ENCODE measurements at regions of chr17 and their contacts with region 1.

Region 1: GRCh38 chr17:49556223-49556971 is 19.3 kb upstream of the NXPH3 start:
- DNase-seq: peak; percentile 64 to 87 (median 73)
- H3K4me3 ChIP-seq: no peak overlapping the region
- H3K27ac ChIP-seq: peak overlapping the region in 1 of 5 donors; percentile 53
- H3K4me1 ChIP-seq: peaks cover 0 to 7% of the 10 kb centered on the region in 2 donors
- H3K27me3 ChIP-seq: no peaks in the 10 kb centered on the region
- CTCF ChIP-seq: peak; percentile 80 to 98 (median 94)
- POLR2A ChIP-seq: no peak

Region 2: GRCh38 chr17:49407981-49408501 is 148.4 kb before region 1 on chr17:
- intact Hi-C with region 1: loop called in 1 of 2 experiments (anchors 10 kb)
- DNase-seq: peak; percentile 44 to 84 (median 57)
- H3K4me3 ChIP-seq: no peak overlapping the region
- H3K27ac ChIP-seq: no peak overlapping the region
- H3K4me1 ChIP-seq: peaks cover 0 to 3% of the 10 kb centered on the region in 2 donors
- H3K27me3 ChIP-seq: no peaks in the 10 kb centered on the region
- CTCF ChIP-seq: peak in 5 of 6 experiments; percentile 49 to 65 (median 54)
- POLR2A ChIP-seq: no peak

Region 3: GRCh38 chr17:49434821-49435670 is 121.4 kb before region 1 on chr17:
- intact Hi-C with region 1: loop called (anchors 2 to 10 kb)
- DNase-seq: peak; percentile 38 to 74 (median 44)
- H3K4me3 ChIP-seq: no peak overlapping the region
- H3K27ac ChIP-seq: no peak overlapping the region
- H3K4me1 ChIP-seq: no peaks in the 10 kb centered on the region
- H3K27me3 ChIP-seq: peaks cover 7% of the 10 kb centered on the region
- CTCF ChIP-seq: peak; percentile 33 to 65 (median 56)
- POLR2A ChIP-seq: no peak

Region 4: GRCh38 chr17:49496183-49496866 is 60.1 kb before region 1 on chr17:
- intact Hi-C with region 1: loop called (anchors 2 to 10 kb)
- DNase-seq: peak; percentile 35 to 84 (median 76)
- H3K4me3 ChIP-seq: peak overlapping the region in 2 of 4 donors; percentile 26 to 50
- H3K27ac ChIP-seq: peak overlapping the region in 1 of 5 donors; percentile 15
- H3K4me1 ChIP-seq: peaks cover 13 to 25% of the 10 kb centered on the region in 2 donors
- H3K27me3 ChIP-seq: peaks cover 60% of the 10 kb centered on the region
- CTCF ChIP-seq: peak; percentile 44 to 90 (median 72)
- POLR2A ChIP-seq: no peak

Region 5: DNA sequence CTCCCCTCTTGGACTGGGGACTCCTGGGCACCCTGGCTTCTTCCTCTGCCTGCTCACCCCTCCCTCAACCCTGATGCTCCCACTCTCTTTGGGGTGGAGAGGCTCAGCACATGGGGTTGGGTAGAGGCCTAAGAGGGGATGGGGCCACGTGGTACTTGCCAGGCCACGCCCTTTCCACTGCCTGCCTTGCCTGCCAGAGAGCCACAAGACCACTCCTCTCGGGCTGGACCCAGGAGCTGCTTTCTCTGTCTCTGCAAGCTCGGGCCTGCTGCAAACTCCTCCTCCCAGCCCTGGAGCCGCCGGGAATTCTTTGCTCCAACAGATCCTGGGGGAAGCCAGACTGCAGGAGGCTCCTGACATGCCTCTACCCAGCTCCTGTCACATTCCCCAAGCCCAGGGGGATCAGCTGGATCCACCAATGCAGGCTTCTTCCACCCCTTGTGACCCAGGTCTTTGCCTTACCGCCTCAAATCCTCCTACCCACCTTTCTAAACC is 424.4 kb after region 1 on chr17:
- intact Hi-C with region 1: no loop called
- DNase-seq: no peak
- H3K4me3 ChIP-seq: no peak overlapping the region
- H3K27ac ChIP-seq: no peak overlapping the region
- H3K4me1 ChIP-seq: no peaks in the 10 kb centered on the region
- H3K27me3 ChIP-seq: peaks cover 3% of the 10 kb centered on the region
- CTCF ChIP-seq: no peak
- POLR2A ChIP-seq: no peak